Astrocyte of the cerebellum (primary cell): ENCODE measurements at regions of chr9 and their contacts with region 1.

Region 1: DNA sequence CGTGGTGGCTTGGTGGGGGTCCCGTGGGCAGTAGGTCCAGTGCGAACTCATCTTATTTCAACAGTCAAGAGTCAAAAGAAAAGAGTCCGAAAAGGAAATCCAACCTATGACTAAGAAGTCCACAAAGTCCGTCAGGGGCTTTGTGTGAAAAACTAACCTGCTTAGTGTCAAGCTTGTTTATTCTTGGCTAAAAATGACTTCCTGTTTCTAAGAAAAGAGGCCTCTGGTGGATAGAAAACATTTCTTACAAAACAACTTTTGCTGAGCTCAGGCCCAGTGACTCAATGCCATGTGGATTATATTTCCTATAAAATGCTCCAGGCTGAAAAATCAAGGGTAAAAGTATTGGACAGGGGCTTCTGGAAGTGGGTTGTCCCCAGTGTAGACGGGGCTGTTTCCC is 105.9 kb downstream of the GADD45G start:
- DNase-seq: no peak
- H3K4me3 ChIP-seq: no peak overlapping the region
- CTCF ChIP-seq: no peak

Region 2: DNA sequence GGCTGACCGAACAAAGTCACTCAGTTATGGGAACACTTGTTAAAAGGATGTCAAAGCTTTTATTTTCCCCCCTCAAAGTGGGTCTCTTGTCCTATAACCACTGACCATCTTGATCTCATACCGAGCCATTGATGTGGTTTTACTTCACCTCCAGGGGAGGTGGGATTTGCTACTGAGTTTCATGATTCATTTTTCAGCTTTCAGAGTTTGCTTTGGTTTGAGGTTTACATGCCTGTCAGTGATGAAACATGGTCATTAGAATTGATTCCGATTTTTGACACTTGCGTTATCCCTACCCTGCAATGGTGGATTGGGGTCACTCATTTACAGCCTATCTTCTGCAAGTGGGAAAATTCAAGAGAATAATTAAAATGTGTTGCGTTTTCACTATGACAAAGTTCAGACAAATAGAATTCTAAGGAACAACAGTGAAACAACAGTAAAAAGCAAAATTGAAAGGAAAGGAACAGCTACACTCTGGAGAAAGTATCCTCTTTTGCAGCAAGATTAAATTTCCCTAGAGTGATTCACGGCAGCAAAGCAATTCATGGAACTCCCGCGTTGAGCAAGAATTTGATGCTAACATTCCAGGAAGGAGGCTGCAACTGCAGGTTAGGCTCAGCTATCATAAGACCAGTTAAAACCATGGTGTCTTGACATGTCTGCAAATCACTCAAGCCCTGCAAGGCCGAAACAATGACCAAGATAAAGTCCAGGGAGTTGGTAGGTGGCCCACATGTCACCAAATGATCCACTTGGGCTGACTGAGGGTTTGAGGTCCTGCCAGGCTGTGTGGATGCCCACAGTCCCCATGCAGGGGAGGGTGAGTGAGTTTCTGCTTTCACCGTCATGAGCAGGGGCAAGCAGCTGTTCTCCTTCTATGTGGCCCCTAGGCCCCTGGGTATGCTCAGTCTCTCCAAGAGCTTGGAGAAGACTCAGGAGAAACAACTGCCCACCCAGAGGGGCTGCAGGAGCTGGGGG is 96.5 kb before region 1 on chr9:
- in situ Hi-C with region 1: loop called (anchors 5 kb)
- DNase-seq: no peak
- H3K4me3 ChIP-seq: no peak overlapping the region
- CTCF ChIP-seq: no peak

Region 3: GRCh38 chr9:89763346-89763985 is 52.8 kb after region 1 on chr9:
- in situ Hi-C with region 1: loop called (anchors 5 kb)
- DNase-seq: no peak
- H3K4me3 ChIP-seq: no peak overlapping the region
- CTCF ChIP-seq: no peak